SK-N-SH (cell line): ENCODE measurements at regions of chr2 and their contacts with region 1.

Region 1: GRCh38 chr2:131413148-131413747 is 49.3 kb upstream of the RAB6D start:
- DNase-seq: peak; percentile 47
- H3K4me3 ChIP-seq: no peak overlapping the region
- H3K27ac ChIP-seq: no peak overlapping the region
- H3K4me1 ChIP-seq: no peaks in the 10 kb centered on the region; a peak in 1 of 4 replicates
- H3K27me3 ChIP-seq: peaks cover 6% of the 10 kb centered on the region; the same call in 1 of the 2 replicates
- CTCF ChIP-seq: peak; percentile 79
- EP300 ChIP-seq: no peak
- RAD21 ChIP-seq: peak; percentile 89

Region 2: GRCh38 chr2:131154071-131154531 is 259.1 kb before region 1 on chr2:
- CTCF ChIA-PET with region 1: interaction called, 23 read pairs
- POLR2A ChIA-PET with region 1: no interaction called
- DNase-seq: peak; percentile 92
- H3K4me3 ChIP-seq: no peak overlapping the region; a peak in 1 of 4 replicates
- H3K27ac ChIP-seq: no peak overlapping the region
- H3K4me1 ChIP-seq: no peaks in the 10 kb centered on the region; a peak in 1 of 4 replicates
- H3K27me3 ChIP-seq: no peaks in the 10 kb centered on the region
- CTCF ChIP-seq: peak; percentile 87
- EP300 ChIP-seq: no peak
- RAD21 ChIP-seq: peak; percentile 97

Region 3: GRCh38 chr2:131425231-131425941 is 12.1 kb after region 1 on chr2:
- CTCF ChIA-PET with region 1: interaction called, 27 read pairs
- POLR2A ChIA-PET with region 1: no interaction called
- DNase-seq: peak; percentile 69
- H3K4me3 ChIP-seq: peak overlapping the region in 1 of 2 experiments; percentile 35; a peak in 2 of 4 replicates
- H3K27ac ChIP-seq: no peak overlapping the region
- H3K4me1 ChIP-seq: no peaks in the 10 kb centered on the region
- H3K27me3 ChIP-seq: peaks cover 42% of the 10 kb centered on the region
- CTCF ChIP-seq: no peak
- EP300 ChIP-seq: no peak
- RAD21 ChIP-seq: no peak

Region 4: DNA sequence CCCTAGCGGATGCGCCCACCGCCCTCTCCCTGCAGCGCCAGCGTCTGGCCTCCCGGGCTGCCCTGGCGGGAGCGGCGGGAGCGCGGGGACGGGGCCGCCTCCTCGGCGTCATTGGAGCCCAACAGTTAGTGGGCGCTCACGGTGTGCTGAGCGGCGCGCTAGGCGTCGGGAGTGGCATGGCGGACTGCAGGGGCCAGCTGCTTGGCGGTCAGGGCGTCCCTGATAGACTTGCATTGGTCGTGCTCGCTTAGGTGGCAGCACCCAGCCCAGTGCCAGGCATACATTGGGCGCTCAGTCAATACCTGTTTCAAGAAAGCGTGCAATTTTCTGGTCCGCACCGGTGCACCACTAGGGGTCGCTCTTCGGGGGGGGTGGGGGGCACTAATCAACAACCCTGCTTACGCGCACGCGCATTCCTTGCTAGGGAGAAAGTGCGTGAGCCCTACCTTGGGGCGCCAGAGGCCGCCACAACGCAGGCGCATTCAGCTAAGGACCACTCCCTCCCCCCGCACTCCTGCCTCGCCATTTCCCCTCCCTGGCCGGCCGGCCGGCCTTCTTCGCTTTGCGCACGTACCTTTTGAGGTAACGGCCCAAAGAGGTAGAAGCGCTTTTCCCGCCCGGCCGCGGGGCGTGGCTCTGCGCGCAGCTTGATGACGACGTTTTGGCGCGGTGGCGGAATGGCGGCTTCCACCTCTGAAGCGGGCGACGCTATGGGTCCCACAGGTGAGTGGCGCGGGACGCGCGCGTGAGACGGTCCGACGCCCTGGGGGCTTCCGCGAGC is 79.4 kb after region 1 on chr2:
- CTCF ChIA-PET with region 1: interaction called, 18 read pairs
- POLR2A ChIA-PET with region 1: no interaction called
- DNase-seq: peak; percentile 100
- H3K4me3 ChIP-seq: peak overlapping the region; percentile 83 to 91
- H3K27ac ChIP-seq: peak overlapping the region; percentile 74 to 91
- H3K4me1 ChIP-seq: peaks cover 6 to 15% of the 10 kb centered on the region in 2 experiments; a peak in 2 of 4 replicates
- H3K27me3 ChIP-seq: no peaks in the 10 kb centered on the region
- CTCF ChIP-seq: peak; percentile 95
- EP300 ChIP-seq: no peak
- RAD21 ChIP-seq: peak; percentile 11; the same call in 1 of the 2 replicates

Region 5: GRCh38 chr2:131673392-131674173 is 260.3 kb after region 1 on chr2:
- CTCF ChIA-PET with region 1: interaction called, 34 read pairs
- POLR2A ChIA-PET with region 1: no interaction called
- DNase-seq: peak; percentile 78
- H3K4me3 ChIP-seq: peak overlapping the region; percentile 45 to 68
- H3K27ac ChIP-seq: no peak overlapping the region
- H3K4me1 ChIP-seq: peaks cover 0 to 9% of the 10 kb centered on the region in 2 experiments; a peak in 1 of 4 replicates
- H3K27me3 ChIP-seq: no peaks in the 10 kb centered on the region
- CTCF ChIP-seq: peak; percentile 79
- EP300 ChIP-seq: no peak
- RAD21 ChIP-seq: peak; percentile 76